CD4-positive, alpha-beta memory T cell (primary cell): ENCODE measurements at regions of chr17 and their contacts with region 1.

Region 1: GRCh38 chr17:1648963-1649843 is 463 bp downstream of the RILP start:
- DNase-seq: peak; percentile 92 to 95 (median 93)
- H3K4me3 ChIP-seq: peak overlapping the region in 1 of 2 donors; percentile 63
- H3K4me3 Mint-ChIP-seq: peak overlapping the region; percentile 24 to 78 (median 68)
- H3K27ac ChIP-seq: peak overlapping the region; percentile 53
- H3K27ac Mint-ChIP-seq: peak overlapping the region in 3 of 7 donors; percentile 35 to 90 (median 53)
- H3K4me1 ChIP-seq: peaks cover 23% of the 10 kb centered on the region
- H3K4me1 Mint-ChIP-seq: peaks cover 6 to 20% (median 12%) of the 10 kb centered on the region in 4 donors
- H3K27me3 ChIP-seq: no peaks in the 10 kb centered on the region
- H3K27me3 Mint-ChIP-seq: no peaks in the 10 kb centered on the region

Region 2: DNA sequence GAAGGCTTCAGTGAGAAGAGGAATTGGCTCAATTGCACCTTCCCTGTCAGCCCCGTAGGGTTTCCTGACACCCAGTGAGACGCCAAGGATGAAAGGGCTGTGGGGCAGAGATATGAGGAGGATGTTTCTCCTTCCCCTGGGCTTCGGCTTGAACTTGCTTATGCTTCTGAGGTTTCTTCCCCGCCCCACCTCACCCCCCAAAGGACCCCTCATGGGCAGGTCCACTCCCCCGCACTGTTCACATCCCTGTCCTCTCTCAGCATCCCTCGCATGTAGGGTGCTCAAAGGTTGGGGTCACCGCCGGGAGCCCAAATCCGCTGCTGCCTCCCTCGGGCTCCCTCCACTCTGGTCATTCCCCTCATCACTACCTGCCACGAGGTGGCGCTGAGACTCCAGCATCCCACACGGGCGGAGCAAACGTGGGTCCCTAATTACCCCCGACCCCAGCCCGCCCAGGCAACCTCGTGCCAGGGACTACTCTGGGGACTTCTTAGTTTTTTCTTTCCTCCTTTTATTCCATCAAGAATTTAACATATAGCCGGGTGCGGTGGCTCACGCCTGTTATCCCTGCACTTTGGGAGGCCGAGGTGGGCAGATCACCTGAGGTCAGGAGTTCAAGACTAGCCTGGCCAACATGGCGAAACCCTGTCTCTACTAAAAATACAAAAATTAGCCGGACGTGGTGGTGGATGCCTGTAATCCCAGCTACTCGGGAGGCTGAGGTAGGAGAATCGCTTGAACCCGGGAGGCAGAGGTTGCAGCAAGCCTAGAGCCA is 373.1 kb before region 1 on chr17:
- CTCF ChIA-PET with region 1: no interaction called
- POLR2A ChIA-PET with region 1: no interaction called
- intact Hi-C with region 1: loop called (anchors 5 kb)
- DNase-seq: peak; percentile 60 to 72 (median 69)
- H3K4me3 ChIP-seq: no peak overlapping the region
- H3K4me3 Mint-ChIP-seq: peak overlapping the region in 4 of 8 donors; percentile 47 to 68 (median 62)
- H3K27ac ChIP-seq: no peak overlapping the region
- H3K27ac Mint-ChIP-seq: peak overlapping the region in 3 of 7 donors; percentile 13 to 88 (median 54)
- H3K4me1 ChIP-seq: peaks cover 5% of the 10 kb centered on the region
- H3K4me1 Mint-ChIP-seq: peaks cover 0 to 8% (median 4%) of the 10 kb centered on the region in 4 donors
- H3K27me3 ChIP-seq: no peaks in the 10 kb centered on the region
- H3K27me3 Mint-ChIP-seq: peaks cover 9 to 22% of the 10 kb centered on the region in 2 donors

Region 3: DNA sequence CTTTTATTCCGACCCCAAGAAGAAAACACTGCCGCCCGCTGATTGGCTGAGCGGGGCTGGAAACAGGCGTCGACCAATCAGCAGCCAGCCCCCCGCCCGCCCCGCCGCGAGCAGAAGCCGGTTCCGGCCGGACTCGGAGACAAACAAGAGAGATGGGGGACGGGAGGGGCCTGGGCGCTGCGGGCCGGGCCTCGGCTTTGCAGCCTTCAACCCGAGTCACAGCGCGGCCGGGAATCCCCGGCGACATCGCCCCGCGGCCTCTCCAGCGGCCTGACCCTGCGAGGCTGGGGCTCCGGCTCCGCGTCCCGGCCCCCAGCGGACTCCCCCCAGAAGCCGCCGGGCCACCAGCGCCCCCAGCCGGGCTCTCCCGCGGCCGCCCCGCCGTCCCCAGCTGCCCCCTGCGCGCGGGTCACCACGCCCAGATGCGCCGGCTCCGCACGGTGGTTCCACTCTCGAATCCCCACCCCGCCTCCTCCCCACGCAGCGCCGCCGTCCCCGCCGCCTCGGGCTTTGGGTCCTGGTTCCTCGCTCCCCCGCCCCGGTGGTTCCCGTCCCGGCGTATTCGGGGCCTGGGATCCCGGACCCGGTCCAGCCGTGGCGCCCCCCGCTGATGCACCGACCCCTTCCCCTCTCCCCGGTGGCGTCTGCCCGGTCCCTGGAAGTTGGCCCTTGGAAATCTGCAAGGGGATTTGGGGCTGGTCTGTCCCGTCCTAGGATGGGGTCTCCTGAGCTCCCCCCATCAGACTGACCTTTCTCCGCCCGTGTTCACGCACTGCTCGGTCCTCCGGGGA is 20.2 kb before region 1 on chr17:
- CTCF ChIA-PET with region 1: interaction called, 10 read pairs
- POLR2A ChIA-PET with region 1: interaction called, 22 read pairs
- intact Hi-C with region 1: loop called (anchors 1 kb)
- DNase-seq: peak; percentile 83 to 90 (median 85)
- H3K4me3 ChIP-seq: peak overlapping the region; percentile 57 to 73
- H3K4me3 Mint-ChIP-seq: peak overlapping the region; percentile 87 to 99 (median 92)
- H3K27ac ChIP-seq: peak overlapping the region; percentile 44
- H3K27ac Mint-ChIP-seq: peak overlapping the region; percentile 75 to 96 (median 86)
- H3K4me1 ChIP-seq: peaks cover 22% of the 10 kb centered on the region
- H3K4me1 Mint-ChIP-seq: peaks cover 3 to 27% (median 12%) of the 10 kb centered on the region in 4 donors
- H3K27me3 ChIP-seq: peaks cover 8% of the 10 kb centered on the region
- H3K27me3 Mint-ChIP-seq: peaks cover 1% of the 10 kb centered on the region in 2 donors

Region 4: GRCh38 chr17:1684378-1685189 is 35.4 kb after region 1 on chr17 and contains the start of gene PRPF8:
- CTCF ChIA-PET with region 1: interaction called, 3 read pairs
- POLR2A ChIA-PET with region 1: interaction called, 24 read pairs
- intact Hi-C with region 1: loop called (anchors 5 kb)
- DNase-seq: peak; percentile 98 to 99 (median 99)
- H3K4me3 ChIP-seq: peak within 1 kb of the TSS; percentile 83 to 96
- H3K4me3 Mint-ChIP-seq: peak within 1 kb of the TSS; percentile 97 to 99 (median 99)
- H3K27ac ChIP-seq: peak within 1 kb of the TSS; percentile 96
- H3K27ac Mint-ChIP-seq: peak within 1 kb of the TSS; percentile 93 to 100 (median 99)
- H3K4me1 ChIP-seq: peaks cover 29% of the 10 kb centered on the region
- H3K4me1 Mint-ChIP-seq: peaks cover 32 to 56% (median 41%) of the 10 kb centered on the region in 4 donors
- H3K27me3 ChIP-seq: no peaks in the 10 kb centered on the region
- H3K27me3 Mint-ChIP-seq: no peaks in the 10 kb centered on the region
- total RNA-seq, gene PRPF8: 429 to 464 TPM

Region 5: DNA sequence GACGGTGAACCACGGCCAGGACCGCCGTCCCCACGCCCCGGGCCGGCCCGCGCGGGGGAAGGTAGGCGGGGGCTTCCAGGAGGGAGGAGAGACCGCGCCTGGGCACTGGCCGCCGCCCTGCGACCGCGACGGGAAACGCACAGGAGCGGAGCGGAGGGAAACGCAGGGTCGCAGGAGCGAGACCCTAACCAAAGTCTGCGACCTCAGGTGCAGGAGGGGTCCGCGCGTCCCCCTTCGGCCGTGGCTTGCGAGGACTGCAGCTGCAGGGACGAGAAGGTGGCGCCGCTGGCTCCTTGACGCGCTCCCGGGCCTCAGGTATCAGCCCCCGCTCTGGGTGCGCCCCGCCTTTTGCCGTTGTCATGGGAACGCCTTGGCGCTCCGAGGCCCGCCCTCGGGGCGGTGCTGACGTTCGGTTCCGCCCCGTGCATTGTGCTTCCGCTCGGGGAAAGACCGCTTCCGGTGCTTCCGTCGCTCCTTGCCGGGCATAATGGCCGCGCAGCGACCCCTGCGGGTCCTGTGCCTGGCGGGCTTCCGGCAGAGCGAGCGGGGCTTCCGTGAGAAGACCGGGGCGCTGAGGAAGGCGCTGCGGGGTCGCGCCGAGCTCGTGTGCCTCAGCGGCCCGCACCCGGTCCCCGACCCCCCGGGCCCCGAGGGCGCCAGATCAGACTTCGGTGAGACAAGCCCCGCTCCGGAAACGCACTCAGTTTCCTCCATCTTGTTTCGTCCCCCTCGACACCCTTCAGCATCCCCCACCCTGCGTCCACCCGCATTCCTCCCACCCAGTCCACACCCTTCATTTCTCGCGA is 392.6 kb after region 1 on chr17 and contains the start of gene OVCA2:
- CTCF ChIA-PET with region 1: interaction called, 4 read pairs
- POLR2A ChIA-PET with region 1: interaction called, 5 read pairs
- intact Hi-C with region 1: loop called (anchors 10 kb)
- DNase-seq: peak; percentile 96 to 98 (median 97)
- H3K4me3 ChIP-seq: peak within 1 kb of the TSS; percentile 64 to 79
- H3K4me3 Mint-ChIP-seq: peak within 1 kb of the TSS; percentile 90 to 94 (median 92)
- H3K27ac ChIP-seq: peak within 1 kb of the TSS; percentile 85
- H3K27ac Mint-ChIP-seq: peak within 1 kb of the TSS; percentile 89 to 98 (median 96)
- H3K4me1 ChIP-seq: peaks cover 24% of the 10 kb centered on the region
- H3K4me1 Mint-ChIP-seq: peaks cover 6 to 32% (median 14%) of the 10 kb centered on the region in 4 donors
- H3K27me3 ChIP-seq: no peaks in the 10 kb centered on the region
- H3K27me3 Mint-ChIP-seq: no peaks in the 10 kb centered on the region
- total RNA-seq, gene OVCA2: 27.9 to 36.7 TPM